ENCODE measurements at regions of chr2 and their contacts with region 1.

Region 1: GRCh38 chr2:151409601-151410484 is at the start of gene RIF1:
- H3K4me3 Mint-ChIP-seq: peak within 1 kb of the TSS; percentile 99
- H3K27ac Mint-ChIP-seq: peak within 1 kb of the TSS; percentile 97
- H3K4me1 Mint-ChIP-seq: peaks cover 17% of the 10 kb centered on the region
- H3K27me3 Mint-ChIP-seq: no peaks in the 10 kb centered on the region

Region 2: GRCh38 chr2:151261231-151261976 is 148.4 kb before region 1 on chr2 and contains the start of gene RBM43:
- intact Hi-C with region 1: loop called (anchors 2 kb)
- H3K4me3 Mint-ChIP-seq: peak within 1 kb of the TSS; percentile 82
- H3K27ac Mint-ChIP-seq: peak within 1 kb of the TSS; percentile 89
- H3K4me1 Mint-ChIP-seq: peaks cover 27% of the 10 kb centered on the region
- H3K27me3 Mint-ChIP-seq: no peaks in the 10 kb centered on the region

Region 3: DNA sequence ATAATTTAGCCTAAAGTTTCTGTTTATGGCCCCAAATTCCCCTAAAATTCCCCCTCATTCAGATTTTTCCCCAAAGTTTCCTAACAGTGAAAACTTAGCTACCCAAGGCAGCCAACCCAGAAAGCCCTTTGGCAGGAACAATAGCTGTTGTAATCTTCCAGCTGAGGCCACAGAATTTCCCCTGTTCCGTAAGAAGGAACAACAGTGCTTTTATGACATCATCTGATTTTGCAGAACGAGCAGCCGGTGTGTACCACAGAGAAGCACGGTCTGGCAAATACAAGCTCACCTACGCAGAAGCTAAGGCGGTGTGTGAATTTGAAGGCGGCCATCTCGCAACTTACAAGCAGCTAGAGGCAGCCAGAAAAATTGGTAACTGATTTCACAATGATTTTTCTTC is 46.1 kb before region 1 on chr2:
- intact Hi-C with region 1: loop called (anchors 5 kb)
- H3K4me3 Mint-ChIP-seq: peak overlapping the region; percentile 41
- H3K27ac Mint-ChIP-seq: peak overlapping the region; percentile 81
- H3K4me1 Mint-ChIP-seq: peaks cover 22% of the 10 kb centered on the region
- H3K27me3 Mint-ChIP-seq: no peaks in the 10 kb centered on the region

Region 4: GRCh38 chr2:151437630-151438029 is 27.8 kb after region 1 on chr2:
- intact Hi-C with region 1: no loop called
- H3K4me3 Mint-ChIP-seq: no peak overlapping the region
- H3K27ac Mint-ChIP-seq: no peak overlapping the region
- H3K4me1 Mint-ChIP-seq: no peaks in the 10 kb centered on the region
- H3K27me3 Mint-ChIP-seq: no peaks in the 10 kb centered on the region